Activated CD4-positive, alpha-beta T cell treated with anti-CD3 and anti-CD28 coated beads, Interleukin-2, amount 10 ng/mL, durations not matched to agents 24 days and 14 days (primary cell): ENCODE measurements at regions of chr2 and their contacts with region 1.

Region 1: DNA sequence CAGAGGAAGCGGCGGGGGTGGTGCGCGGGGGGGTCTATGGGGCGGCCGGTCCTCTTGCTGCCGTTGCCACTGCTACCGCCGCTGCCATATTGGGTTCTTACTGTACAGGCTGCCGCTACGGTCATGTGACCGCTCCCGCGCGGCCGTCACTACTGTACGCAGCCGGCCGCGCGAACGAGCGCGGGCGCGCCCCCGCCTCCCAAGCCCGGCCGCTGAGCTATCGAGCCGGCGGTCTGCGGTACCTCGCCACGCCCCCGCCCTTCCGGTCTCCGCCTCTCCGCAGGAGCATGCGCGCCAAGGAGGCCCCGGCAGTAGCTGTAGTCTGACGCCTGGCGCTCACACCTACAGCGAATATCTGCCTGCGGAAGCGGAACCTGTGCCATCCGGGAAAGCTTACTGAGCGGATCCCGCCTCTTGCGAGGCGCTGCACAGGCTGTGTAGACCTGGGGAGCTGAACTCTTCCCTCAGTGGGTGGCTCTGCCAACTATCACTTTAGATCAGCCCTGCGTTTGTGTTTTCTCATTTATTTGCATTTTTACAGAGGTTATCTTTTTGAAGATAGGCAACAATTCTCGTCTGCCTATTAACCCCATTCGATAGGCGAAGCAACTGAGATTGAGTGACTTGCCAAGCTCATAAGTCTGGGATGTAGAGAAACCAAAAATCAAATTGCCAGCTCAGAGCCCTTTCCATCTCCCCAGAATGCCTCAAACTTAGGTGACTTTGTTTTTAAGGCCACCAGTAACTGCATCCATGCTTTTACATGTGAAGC is at the start of gene ASXL2:
- DNase-seq: peak; percentile 99
- H3K4me3 Mint-ChIP-seq: peak within 1 kb of the TSS; percentile 96
- H3K27ac Mint-ChIP-seq: peak within 1 kb of the TSS; percentile 96
- H3K4me1 Mint-ChIP-seq: peaks cover 38% of the 10 kb centered on the region
- H3K27me3 Mint-ChIP-seq: peaks cover 4% of the 10 kb centered on the region
- total RNA-seq, gene ASXL2: 57.1 and 57.4 TPM in 2 replicates

Region 2: DNA sequence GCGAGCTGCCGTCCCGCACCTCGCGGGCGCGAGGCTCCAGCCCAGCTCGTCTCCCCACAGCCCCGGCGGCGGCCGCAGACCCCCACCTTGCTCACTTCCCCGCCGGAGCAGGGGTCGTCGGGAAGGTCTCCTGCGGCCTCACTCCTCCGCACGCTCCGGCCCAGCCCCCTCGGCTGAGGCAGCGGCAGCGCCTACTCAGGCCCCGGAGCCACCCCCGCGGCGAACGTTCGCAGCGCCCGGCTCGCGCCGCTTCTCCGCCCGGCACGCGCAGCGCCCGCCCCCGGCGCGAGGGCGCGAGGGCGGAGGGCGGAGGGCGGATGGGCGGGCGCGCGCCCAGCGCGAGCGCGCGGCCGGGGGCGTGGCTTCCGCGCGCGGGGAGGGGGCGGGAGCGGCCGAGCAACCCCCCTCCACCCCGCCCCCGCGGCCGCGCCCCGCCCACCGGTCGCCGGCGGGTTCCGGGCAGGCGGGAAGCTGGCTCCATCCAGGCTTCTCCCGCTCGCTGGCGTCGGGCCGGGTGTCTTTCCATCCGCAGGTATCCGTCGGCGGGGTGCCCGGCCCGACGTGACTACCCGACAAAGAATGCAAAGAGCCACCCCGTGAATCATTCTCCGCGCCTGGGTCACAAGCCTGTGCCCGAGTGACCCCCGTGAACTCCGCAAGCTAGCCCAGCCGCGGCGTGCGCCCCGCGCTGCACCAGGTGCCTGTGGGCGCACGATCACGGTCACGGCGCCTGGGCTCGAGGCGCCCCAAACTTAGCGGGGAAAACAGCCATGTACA is 205.1 kb before region 1 on chr2 and contains the start of gene DTNB:
- intact Hi-C with region 1: loop called (anchors 2 kb)
- DNase-seq: peak; percentile 94
- H3K4me3 Mint-ChIP-seq: peak within 1 kb of the TSS; percentile 86
- H3K27ac Mint-ChIP-seq: peak within 1 kb of the TSS; percentile 85
- H3K4me1 Mint-ChIP-seq: peaks cover 27% of the 10 kb centered on the region
- H3K27me3 Mint-ChIP-seq: peaks cover 24% of the 10 kb centered on the region
- total RNA-seq, gene DTNB: 25.8 and 30.5 TPM in 2 replicates

Region 3: GRCh38 chr2:25833566-25833965 is 45.0 kb before region 1 on chr2:
- intact Hi-C with region 1: loop called (anchors 5 kb)
- DNase-seq: no peak
- H3K4me3 Mint-ChIP-seq: no peak overlapping the region
- H3K27ac Mint-ChIP-seq: peak overlapping the region; percentile 45
- H3K4me1 Mint-ChIP-seq: peaks cover 38% of the 10 kb centered on the region
- H3K27me3 Mint-ChIP-seq: no peaks in the 10 kb centered on the region

Region 4: GRCh38 chr2:25891672-25892071 is 13.1 kb after region 1 on chr2:
- intact Hi-C with region 1: no loop called
- DNase-seq: no peak
- H3K4me3 Mint-ChIP-seq: no peak overlapping the region
- H3K27ac Mint-ChIP-seq: no peak overlapping the region
- H3K4me1 Mint-ChIP-seq: no peaks in the 10 kb centered on the region
- H3K27me3 Mint-ChIP-seq: peaks cover 7% of the 10 kb centered on the region

Region 5: DNA sequence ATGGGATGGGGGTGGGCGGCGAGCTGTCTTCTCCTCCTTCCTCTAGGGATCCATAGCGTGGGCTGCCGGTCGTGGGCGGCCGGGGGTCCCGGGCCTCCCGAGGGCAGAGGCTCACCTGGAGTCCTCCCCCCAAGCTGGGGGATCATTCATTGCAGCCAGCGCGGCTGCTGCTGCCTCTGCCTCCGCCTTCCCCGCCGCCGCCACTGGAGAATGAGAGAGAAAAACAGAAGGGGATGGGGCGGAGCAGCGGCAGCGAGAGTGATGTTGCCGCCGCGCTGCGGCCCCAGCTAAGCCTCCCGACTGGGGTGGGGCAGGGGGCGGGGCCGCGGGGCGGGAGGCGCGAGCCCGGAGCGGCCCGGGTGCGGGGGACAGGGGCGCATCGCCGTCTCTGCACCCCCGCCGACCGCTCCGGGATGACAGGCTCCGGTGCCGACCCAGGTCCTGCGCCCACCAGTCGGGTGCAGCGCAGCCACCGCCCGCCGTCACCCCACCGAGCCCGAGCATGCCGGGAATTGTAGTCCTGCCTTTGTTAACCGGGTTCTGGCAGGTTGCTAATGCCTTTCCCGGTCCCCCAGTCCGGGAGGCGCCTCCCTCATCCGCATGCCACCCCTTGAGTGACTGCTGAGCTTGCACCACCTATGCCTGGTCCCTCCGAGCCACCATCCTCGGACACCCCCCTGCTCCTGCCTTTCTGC is 103.9 kb after region 1 on chr2 and contains the start of gene KIF3C:
- intact Hi-C with region 1: loop called (anchors 2 kb)
- DNase-seq: peak; percentile 93
- H3K4me3 Mint-ChIP-seq: peak within 1 kb of the TSS; percentile 93
- H3K27ac Mint-ChIP-seq: peak within 1 kb of the TSS; percentile 87
- H3K4me1 Mint-ChIP-seq: peaks cover 15% of the 10 kb centered on the region
- H3K27me3 Mint-ChIP-seq: no peaks in the 10 kb centered on the region
- total RNA-seq, gene KIF3C: 6.2 and 6.7 TPM in 2 replicates

Region 6: DNA sequence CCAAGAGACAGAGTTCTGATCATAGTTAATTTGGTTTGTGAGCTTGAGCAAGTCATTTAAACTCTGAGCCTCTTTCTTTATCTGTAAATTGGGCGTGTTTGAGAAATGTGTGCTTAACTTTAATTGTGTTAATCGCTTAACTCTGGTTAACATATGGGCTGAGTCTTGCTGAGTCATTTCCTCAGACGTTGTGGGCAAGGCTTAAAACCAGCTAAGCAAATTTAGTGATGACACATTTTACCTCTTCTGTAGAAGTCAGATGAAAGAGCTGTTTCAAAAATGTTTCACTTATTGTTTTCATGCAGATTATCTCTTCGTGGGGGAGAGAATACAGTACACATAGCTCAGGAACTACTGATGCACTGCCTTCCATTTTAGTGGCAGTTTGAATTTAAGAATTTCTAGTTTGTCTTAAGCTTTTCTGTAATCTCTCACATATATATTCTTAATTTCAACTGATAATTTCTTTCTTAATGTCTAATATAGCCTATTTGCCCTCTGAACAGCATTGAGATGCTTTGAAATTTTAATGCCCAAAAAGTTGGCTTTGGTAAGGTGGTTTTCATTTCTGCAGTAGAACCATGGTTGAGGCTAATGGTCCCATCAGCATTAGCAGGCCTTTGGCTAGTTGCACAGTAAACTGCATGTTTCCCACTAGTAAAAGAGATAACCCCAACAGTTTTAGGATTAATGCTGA is 190.2 kb after region 1 on chr2:
- intact Hi-C with region 1: loop called (anchors 10 kb)
- DNase-seq: peak; percentile 87
- H3K4me3 Mint-ChIP-seq: peak overlapping the region; percentile 58
- H3K27ac Mint-ChIP-seq: peak overlapping the region; percentile 89
- H3K4me1 Mint-ChIP-seq: peaks cover 46% of the 10 kb centered on the region
- H3K27me3 Mint-ChIP-seq: no peaks in the 10 kb centered on the region

Region 7: DNA sequence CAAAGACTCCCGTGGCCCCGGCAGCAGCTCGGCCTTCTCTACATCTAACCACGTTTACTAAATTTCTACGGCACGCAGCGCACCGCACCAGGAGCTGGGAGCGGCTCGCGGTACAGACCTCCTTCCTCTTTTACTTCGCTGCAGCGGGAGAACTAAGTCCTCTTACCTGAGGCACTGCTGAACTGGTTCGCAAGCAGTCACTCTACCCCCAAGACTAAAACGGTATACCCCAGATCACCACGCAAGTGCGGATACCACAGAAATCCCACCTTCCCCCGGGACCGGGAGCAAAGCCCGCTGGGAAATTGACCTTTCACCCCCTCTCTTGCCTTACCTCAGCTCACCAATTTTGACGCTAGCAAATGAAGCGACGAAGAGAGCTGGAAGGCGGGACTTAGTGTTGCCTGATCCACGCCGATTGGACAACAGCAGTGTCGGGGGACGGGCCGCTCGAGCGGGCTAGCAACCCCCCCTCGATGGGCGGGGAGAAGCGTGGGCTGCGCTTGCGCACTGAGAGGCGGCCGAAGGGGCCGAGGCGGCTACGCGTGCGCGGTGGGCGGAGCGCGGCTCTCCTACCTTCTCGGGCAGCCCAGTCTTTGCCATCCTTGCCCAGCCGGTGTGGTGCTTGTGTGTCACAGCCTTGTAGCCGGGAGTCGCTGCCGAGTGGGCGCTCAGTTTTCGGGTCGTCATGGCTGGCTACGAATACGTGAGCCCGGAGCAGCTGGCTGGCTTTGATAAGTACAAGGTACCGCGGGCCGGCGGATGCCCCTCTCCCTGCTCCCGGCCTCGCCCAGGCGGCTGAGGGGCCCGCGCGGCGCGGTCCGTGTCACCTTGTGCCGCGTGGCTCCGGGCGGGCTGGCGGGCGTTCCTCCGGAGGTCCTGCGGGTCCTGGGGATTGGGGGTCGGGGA is 467.3 kb after region 1 on chr2 and contains the start of gene SELENOI:
- intact Hi-C with region 1: loop called (anchors 5 kb)
- DNase-seq: peak; percentile 100
- H3K4me3 Mint-ChIP-seq: peak within 1 kb of the TSS; percentile 96
- H3K27ac Mint-ChIP-seq: peak within 1 kb of the TSS; percentile 96
- H3K4me1 Mint-ChIP-seq: peaks cover 21% of the 10 kb centered on the region
- H3K27me3 Mint-ChIP-seq: no peaks in the 10 kb centered on the region
- total RNA-seq, gene SELENOI: 63.7 and 68.8 TPM in 2 replicates